Gastrocnemius medialis (tissue), 4 donors: ENCODE measurements at regions of chr1 and their contacts with region 1.

Region 1: DNA sequence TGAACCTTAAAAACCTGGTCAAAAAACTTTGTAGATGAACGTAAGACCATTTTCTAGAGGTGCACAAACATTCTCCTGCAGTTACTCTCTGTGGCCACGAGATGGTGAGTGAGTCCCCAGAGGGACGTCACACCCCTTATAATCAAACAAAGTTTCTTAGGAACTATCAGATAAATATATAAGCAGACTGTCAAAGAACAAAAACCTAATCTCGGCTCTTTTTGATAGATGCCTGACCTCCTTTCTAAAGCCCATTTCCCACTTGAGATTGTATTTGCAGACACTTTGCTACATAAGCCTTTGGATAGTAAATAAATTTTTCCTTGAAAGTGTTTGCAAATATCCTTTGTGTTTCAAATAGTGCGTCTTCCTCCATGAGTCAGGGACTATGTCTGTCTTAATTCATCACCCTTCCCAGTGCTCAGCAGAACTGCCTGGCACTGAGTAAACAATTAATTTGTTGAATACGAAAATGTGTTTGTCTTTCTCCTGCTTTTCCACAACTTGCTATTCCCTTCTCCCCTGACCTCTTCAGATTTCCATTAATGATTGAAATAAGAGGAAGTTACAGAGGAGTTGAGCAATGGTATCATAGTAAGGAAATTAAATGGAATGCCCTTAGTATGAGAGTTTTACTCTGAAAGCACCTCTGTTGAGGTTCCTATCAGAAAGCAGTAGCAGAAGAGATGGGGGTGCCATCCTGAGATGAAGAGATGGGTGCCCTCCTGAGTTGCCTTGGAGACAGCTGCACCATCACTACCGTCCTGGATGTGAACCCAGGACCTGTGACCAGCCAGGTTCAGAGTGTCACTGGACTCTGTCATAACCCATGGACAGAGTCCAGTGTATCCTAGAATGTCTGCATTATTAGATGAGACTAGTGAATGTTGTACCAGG is 57.8 kb upstream of the RAVER2 start:
- DNase-seq: no peak
- ATAC-seq: peak; percentile 52 to 60
- H3K4me3 ChIP-seq: no peak overlapping the region
- H3K27ac ChIP-seq: no peak overlapping the region
- H3K4me1 ChIP-seq: no peaks in the 10 kb centered on the region
- H3K27me3 ChIP-seq: no peaks in the 10 kb centered on the region
- CTCF ChIP-seq: peak; percentile 64 to 84 (median 69)
- POLR2A ChIP-seq: no peak

Region 2: GRCh38 chr1:64268653-64269557 is 418.2 kb before region 1 on chr1:
- in situ Hi-C with region 1: loop called in 1 of 4 experiments (anchors 25 kb)
- intact Hi-C with region 1: no loop called
- DNase-seq: peak; percentile 45 to 47
- ATAC-seq: peak; percentile 77 to 83
- H3K4me3 ChIP-seq: no peak overlapping the region
- H3K27ac ChIP-seq: no peak overlapping the region
- H3K4me1 ChIP-seq: no peaks in the 10 kb centered on the region
- H3K27me3 ChIP-seq: no peaks in the 10 kb centered on the region
- CTCF ChIP-seq: peak; percentile 52 to 79 (median 63)
- POLR2A ChIP-seq: no peak

Region 3: DNA sequence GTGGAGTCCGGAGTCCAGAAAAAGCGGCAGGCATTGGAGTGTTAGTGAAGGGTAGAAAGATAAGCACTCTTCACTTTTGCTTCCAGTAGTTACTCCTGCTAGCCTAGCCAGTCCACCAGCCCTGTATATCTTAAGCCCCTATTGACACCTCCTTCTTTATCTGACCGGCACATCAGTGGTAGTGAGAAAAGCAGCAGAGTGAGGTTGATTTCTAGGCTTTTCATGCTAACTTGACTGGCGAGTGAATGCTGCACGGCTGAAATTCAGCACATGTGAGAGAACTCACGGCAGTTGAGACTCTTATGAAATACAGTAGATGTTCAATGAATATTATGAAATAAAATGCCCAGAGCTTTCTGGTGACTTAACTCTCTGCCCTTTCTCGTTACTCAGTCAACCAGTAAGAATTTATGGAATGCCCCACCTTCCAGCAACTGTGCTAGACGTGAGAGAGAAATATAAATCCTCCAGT is 88.9 kb before region 1 on chr1:
- in situ Hi-C with region 1: no loop called
- intact Hi-C with region 1: no loop called
- DNase-seq: no peak
- ATAC-seq: no peak
- H3K4me3 ChIP-seq: no peak overlapping the region
- H3K27ac ChIP-seq: no peak overlapping the region
- H3K4me1 ChIP-seq: no peaks in the 10 kb centered on the region
- H3K27me3 ChIP-seq: no peaks in the 10 kb centered on the region
- CTCF ChIP-seq: no peak
- POLR2A ChIP-seq: no peak